Activated CD8-positive, alpha-beta T cell treated with anti-CD3 and anti-CD28 coated beads, Interleukin-2, amount 10 ng/mL, durations not matched to agents 7 days and 5 days (primary cell): ENCODE measurements at regions of chr10 and their contacts with region 1.

Region 1: DNA sequence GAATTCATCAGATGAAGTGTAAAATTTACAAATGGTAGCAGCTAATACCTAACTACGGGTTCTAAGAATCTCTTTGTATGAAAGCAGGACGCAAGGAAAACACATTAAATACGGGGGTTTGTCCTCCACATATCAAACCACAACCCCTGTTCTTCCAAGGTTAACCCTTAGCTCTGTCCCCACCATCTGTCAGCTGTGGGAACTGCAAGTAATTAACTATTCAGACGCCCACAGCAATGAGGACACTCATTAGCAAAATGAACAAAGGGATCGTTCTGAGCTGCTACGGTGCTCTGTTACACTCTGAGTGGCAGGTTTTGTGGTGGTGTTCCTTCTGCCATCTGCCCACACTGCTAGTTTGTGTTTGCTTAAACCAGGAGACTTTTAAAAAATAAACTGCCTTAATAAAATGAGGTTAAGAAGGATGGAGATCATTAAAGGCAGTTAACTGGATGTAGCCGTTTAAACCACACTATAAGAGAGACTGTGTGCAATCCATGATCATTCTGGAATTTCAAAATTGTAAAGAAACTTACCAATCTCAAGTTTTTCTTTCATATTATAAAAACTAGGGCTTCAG is 51.4 kb downstream of the C10orf67 start:
- DNase-seq: peak; percentile 58
- ATAC-seq: peak; percentile 67
- H3K4me3 Mint-ChIP-seq: no peak overlapping the region
- H3K27ac Mint-ChIP-seq: no peak overlapping the region
- H3K4me1 Mint-ChIP-seq: no peaks in the 10 kb centered on the region
- H3K27me3 Mint-ChIP-seq: peaks cover 13% of the 10 kb centered on the region

Region 2: GRCh38 chr10:23158370-23158769 is 134.9 kb before region 1 on chr10:
- CTCF ChIA-PET with region 1: interaction called, 71 read pairs
- POLR2A ChIA-PET with region 1: no interaction called
- DNase-seq: peak; percentile 59
- ATAC-seq: peak; percentile 76
- H3K4me3 Mint-ChIP-seq: no peak overlapping the region
- H3K27ac Mint-ChIP-seq: no peak overlapping the region
- H3K4me1 Mint-ChIP-seq: peaks cover 9% of the 10 kb centered on the region
- H3K27me3 Mint-ChIP-seq: peaks cover 9% of the 10 kb centered on the region

Region 3: DNA sequence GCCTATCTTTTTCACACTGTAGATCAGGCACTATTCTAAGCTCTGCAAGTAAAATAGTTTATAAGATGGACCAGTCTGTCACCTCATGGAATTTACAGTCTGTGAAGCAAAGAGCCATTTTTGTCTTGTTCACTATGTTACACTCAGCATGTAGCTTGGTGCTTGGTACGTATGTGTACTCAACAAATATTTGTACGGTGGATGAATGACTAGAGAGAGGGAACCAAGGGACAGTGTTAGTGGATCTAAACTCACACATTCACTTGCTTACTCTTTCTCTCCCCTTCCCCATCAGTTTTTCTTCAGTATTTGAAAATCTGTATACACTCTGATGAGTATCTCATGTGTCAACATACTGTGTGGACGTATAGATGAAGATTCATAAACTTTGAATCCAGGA is 55.2 kb before region 1 on chr10:
- CTCF ChIA-PET with region 1: no interaction called
- POLR2A ChIA-PET with region 1: no interaction called
- DNase-seq: no peak
- ATAC-seq: no peak
- H3K4me3 Mint-ChIP-seq: no peak overlapping the region
- H3K27ac Mint-ChIP-seq: no peak overlapping the region
- H3K4me1 Mint-ChIP-seq: no peaks in the 10 kb centered on the region
- H3K27me3 Mint-ChIP-seq: no peaks in the 10 kb centered on the region

Region 4: DNA sequence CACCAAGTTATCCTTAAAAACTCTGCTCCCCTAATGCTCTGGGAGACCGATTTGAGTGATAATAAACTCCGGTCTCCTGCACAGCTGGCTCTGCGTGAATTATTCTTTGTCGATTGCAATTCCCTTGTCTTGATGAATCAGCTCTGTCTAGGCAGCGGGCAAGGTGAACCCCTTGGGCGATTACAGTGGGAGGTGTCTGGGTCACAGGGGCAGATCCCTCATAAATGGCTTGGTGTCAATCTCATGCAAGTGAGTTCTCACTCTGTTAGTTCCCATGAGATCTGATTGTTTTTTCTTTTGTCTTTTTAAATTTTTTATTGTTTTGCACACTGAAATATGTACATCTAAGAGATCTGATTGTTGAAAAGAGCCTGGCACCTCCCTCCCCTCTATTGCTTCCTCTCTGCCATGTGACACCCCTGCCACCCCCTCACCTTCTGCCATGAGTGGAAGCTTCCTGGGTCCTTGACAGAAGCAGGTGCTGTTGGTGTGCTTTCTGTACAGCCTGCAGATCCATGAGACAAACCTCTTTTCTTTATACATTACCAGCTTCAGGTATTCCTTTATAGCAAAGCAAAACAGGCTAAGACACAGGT is 166.2 kb after region 1 on chr10:
- CTCF ChIA-PET with region 1: no interaction called
- POLR2A ChIA-PET with region 1: no interaction called
- DNase-seq: no peak
- ATAC-seq: no peak
- H3K4me3 Mint-ChIP-seq: no peak overlapping the region
- H3K27ac Mint-ChIP-seq: no peak overlapping the region
- H3K4me1 Mint-ChIP-seq: no peaks in the 10 kb centered on the region
- H3K27me3 Mint-ChIP-seq: no peaks in the 10 kb centered on the region

Region 5: GRCh38 chr10:23525406-23525805 is 232.2 kb after region 1 on chr10:
- CTCF ChIA-PET with region 1: interaction called, 11 read pairs
- POLR2A ChIA-PET with region 1: no interaction called
- DNase-seq: no peak
- ATAC-seq: no peak
- H3K4me3 Mint-ChIP-seq: no peak overlapping the region
- H3K27ac Mint-ChIP-seq: no peak overlapping the region
- H3K4me1 Mint-ChIP-seq: no peaks in the 10 kb centered on the region
- H3K27me3 Mint-ChIP-seq: peaks cover 3% of the 10 kb centered on the region